Activated CD4-positive, alpha-beta T cell treated with anti-CD3 and anti-CD28 coated beads, Interleukin-2, amount 10 ng/mL, durations not matched to agents 24 days and 14 days (primary cell): ENCODE measurements at regions of chr1 and their contacts with region 1.

Region 1: DNA sequence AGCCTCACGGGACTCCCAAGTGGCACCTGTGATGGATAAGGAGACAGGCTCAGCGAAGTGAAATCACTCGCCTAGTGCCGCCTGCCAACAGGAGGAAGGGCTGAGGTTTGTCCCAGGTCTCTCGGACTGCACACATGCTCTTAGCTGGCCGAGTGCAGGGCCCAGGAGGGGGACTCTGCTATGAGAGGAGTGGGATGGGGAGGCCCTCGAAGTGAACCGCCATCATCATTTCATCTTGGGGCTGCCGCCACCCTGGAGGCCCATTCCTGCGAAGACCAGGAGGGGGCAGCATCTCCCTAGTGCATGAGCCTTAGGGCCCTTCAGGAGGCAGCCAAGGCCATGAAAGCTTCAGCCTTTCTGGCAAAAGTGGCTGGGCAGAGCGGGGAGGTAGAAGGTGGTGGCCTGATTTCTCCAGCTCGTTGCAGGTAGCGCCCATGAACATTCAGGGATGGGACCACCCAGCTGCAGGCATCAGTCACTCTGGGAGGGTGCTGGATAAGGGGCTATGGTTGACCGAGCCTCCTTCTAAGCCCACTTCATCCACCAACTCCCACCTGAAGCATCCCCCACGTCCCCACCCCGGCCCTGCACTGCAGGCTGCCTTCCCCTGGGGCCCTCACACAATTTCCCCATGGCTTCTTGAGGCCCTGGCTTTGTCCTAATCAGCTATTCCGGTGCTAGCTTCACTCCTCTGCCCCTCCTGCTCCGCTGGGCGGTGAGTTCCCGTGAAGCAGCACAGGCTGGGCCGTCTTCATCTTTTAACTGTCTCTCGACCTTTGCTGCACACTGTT is 17.2 kb upstream of the RASSF5 start:
- DNase-seq: peak; percentile 89
- H3K4me3 Mint-ChIP-seq: no peak overlapping the region
- H3K27ac Mint-ChIP-seq: no peak overlapping the region
- H3K4me1 Mint-ChIP-seq: peaks cover 13% of the 10 kb centered on the region
- H3K27me3 Mint-ChIP-seq: no peaks in the 10 kb centered on the region

Region 2: DNA sequence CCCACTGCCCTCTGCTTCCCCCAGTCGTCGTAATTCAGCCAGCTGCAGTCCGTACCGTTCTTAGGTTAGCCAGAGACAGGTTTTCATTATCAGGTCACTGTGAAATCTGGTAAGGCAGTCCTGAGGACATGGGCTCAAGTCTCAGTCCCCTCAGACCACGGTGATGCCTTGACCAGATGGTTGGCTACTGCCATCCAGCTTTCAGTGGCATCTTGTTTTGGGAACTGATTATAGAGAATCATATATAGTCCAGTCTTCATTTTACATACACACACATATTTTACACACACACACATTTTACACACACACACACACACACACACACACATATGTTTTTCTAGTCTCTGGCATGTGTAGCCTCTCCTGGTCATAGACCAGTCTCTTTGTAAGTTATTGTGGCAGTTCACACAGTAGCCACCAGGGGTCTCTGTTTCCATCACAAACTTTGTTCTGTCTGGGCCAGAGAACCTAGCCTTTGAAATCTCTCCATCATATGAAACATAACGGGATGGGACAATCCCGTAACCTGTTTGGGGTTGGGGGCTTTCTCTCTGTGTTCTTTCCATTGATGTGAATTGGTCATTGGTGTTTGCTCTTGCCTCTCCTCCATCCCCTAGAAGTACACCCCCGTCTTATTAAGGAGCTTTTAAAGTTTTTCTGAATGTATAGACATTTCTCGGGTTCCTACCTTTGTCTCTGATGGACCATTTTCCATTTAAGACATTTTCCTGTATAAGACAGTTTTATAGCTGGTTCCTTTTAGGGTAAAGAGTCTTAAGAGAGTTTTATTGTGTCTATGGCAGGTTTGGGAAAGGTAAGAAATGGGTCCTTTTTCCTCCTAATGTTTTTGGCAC is 28.3 kb before region 1 on chr1:
- intact Hi-C with region 1: no loop called
- DNase-seq: peak; percentile 94
- H3K4me3 Mint-ChIP-seq: no peak overlapping the region
- H3K27ac Mint-ChIP-seq: peak overlapping the region; percentile 5
- H3K4me1 Mint-ChIP-seq: peaks cover 44% of the 10 kb centered on the region
- H3K27me3 Mint-ChIP-seq: no peaks in the 10 kb centered on the region

Region 3: DNA sequence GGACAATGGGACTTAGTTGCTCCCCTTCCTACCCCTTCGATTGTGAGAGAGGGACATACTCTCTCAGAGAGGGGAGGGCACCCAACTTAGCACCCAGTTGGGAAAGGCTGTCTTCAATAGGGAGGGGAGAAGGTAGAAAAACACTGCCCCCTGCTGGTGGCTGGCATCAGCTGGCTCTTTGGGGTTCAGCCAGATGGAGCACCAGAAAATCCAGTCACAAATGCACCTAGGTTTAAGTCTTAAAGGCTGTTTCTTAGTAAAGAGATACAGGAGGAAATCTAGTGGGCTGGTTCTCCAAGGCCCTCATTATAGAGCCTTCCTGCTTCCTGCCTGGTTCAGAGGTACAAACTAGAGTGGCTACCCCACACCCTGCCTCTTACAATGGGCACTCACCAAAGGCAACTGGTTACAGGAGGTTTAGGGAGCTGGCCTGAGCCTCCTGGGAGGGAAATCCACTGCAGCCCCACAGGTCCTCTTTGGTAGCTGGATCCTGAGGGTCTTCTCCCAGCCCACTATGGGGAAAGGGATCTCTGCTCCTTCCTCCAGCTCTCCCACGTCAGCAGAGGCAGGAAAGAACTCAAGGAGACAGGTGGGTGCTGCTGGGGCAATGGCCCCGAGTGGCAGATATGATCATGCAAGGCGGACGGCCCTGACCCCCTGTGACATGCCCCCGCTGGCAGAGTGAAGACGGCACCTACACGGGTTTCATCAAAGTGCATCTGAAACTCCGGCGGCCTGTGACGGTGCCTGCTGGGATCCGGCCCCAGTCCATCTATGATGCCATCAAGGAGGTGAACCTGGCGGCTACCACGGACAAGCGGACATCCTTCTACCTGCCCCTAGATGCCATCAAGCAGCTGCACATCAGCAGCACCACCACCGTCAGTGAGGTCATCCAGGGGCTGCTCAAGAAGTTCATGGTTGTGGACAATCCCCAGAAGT is 93.8 kb after region 1 on chr1:
- intact Hi-C with region 1: loop called (anchors 1 kb)
- DNase-seq: peak; percentile 94
- H3K4me3 Mint-ChIP-seq: peak overlapping the region; percentile 84
- H3K27ac Mint-ChIP-seq: peak overlapping the region; percentile 100
- H3K4me1 Mint-ChIP-seq: peaks cover 83% of the 10 kb centered on the region
- H3K27me3 Mint-ChIP-seq: no peaks in the 10 kb centered on the region

Region 4: GRCh38 chr1:206663832-206664652 is 173.9 kb after region 1 on chr1:
- intact Hi-C with region 1: loop called (anchors 5 kb)
- DNase-seq: peak; percentile 92
- H3K4me3 Mint-ChIP-seq: peak overlapping the region; percentile 57
- H3K27ac Mint-ChIP-seq: peak overlapping the region; percentile 39
- H3K4me1 Mint-ChIP-seq: peaks cover 34% of the 10 kb centered on the region
- H3K27me3 Mint-ChIP-seq: peaks cover 2% of the 10 kb centered on the region